ENCODE measurements at regions of chr7 and their contacts with region 1.

Region 1: DNA sequence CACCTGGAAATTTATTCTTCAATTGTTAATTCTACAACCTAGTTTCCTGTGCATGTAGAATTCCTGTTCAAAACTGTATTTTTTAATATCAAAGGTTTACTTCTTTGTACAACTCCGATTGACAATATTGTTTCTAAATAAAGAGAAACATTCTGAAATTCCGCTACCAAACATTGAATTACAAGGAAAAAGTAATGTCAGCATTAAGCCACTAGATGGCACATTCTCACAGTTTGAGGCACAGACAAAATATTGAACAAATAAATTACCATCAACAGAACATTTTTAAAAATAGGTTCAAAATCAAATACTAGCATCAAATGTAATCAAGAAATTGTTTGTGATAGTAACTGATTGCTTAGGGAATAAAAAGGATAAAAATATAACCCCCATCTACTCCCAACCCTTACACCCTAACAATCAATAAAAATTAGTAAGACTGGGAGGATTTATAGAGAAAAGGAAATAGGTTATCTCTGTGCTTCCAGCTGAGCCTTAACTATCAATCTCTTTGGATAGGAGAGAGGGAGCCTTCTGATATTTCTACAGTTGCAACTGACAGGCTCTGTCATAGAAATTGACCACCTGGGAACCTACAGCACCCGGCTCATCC is 86.6 kb upstream of the C7orf33 start:
- DNase-seq: peak in 7 of 9 donors; percentile 18 to 52 (median 40)
- ATAC-seq: no peak
- H3K4me3 ChIP-seq: no peak overlapping the region
- H3K4me3 Mint-ChIP-seq: no peak overlapping the region
- H3K27ac ChIP-seq: no peak overlapping the region
- H3K27ac Mint-ChIP-seq: no peak overlapping the region
- H3K4me1 ChIP-seq: no peaks in the 10 kb centered on the region
- H3K4me1 Mint-ChIP-seq: peaks cover 0 to 7% (median 0%) of the 10 kb centered on the region in 7 donors
- H3K27me3 ChIP-seq: no peaks in the 10 kb centered on the region
- H3K27me3 Mint-ChIP-seq: peaks cover 0 to 27% (median 16%) of the 10 kb centered on the region in 5 donors

Region 2: DNA sequence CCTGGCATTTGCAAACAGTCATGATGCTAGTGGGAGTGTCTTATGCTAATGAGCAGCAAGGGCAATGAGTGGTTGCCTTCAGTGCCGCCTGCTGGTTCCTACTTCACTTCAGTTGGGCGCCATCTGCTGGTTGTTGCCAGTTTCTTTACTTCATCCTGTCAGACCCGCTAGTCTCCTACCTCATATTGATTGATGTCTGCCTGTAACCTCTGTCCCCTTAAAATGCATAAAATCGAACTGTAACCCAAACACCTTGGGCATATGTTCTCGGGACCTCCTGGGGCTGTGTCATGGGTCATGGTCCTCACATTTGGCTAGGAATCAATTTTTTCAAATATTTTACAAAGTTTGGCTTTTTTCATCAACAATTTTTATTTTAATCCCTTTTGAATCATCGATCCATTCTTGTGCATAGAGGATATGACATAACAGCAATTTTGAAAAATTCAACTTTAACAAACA is 23.8 kb after region 1 on chr7:
- CTCF ChIA-PET with region 1: no interaction called
- POLR2A ChIA-PET with region 1: no interaction called
- intact Hi-C with region 1: loop called in 1 of 2 experiments (anchors 1 kb)
- DNase-seq: peak; percentile 63 to 81 (median 77)
- ATAC-seq: peak; percentile 100
- H3K4me3 ChIP-seq: no peak overlapping the region
- H3K4me3 Mint-ChIP-seq: no peak overlapping the region
- H3K27ac ChIP-seq: no peak overlapping the region
- H3K27ac Mint-ChIP-seq: no peak overlapping the region
- H3K4me1 ChIP-seq: no peaks in the 10 kb centered on the region
- H3K4me1 Mint-ChIP-seq: peaks cover 0 to 5% (median 0%) of the 10 kb centered on the region in 7 donors
- H3K27me3 ChIP-seq: no peaks in the 10 kb centered on the region
- H3K27me3 Mint-ChIP-seq: peaks cover 17 to 45% (median 30%) of the 10 kb centered on the region in 5 donors

Region 3: DNA sequence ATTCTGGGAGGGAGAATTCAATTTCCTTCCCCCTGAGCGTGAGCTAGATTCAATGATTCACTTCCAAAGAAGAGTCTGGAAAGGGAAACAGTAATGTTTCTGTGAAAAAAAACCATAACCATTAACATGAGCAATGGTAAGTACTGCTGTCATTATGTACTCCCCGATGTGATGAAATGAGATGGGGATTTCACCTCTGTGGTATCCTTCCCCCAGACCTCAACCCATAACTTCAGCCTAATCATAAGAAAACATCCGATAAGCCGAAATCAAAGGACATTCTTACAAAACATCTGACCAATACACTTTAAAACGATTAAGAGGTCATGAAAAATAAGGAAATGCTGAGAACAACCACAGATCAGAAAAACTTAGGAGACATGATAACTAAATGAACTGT is 352.9 kb after region 1 on chr7:
- CTCF ChIA-PET with region 1: no interaction called
- POLR2A ChIA-PET with region 1: no interaction called
- intact Hi-C with region 1: loop called in 1 of 2 experiments (anchors 5 kb)
- DNase-seq: no peak
- ATAC-seq: peak; percentile 57
- H3K4me3 ChIP-seq: no peak overlapping the region
- H3K4me3 Mint-ChIP-seq: peak overlapping the region in 1 of 10 donors; percentile 60
- H3K27ac ChIP-seq: no peak overlapping the region
- H3K27ac Mint-ChIP-seq: peak overlapping the region in 1 of 9 donors; percentile 63
- H3K4me1 ChIP-seq: peaks cover 3 to 5% of the 10 kb centered on the region in 2 donors
- H3K4me1 Mint-ChIP-seq: peaks cover 8 to 45% (median 15%) of the 10 kb centered on the region in 7 donors
- H3K27me3 ChIP-seq: no peaks in the 10 kb centered on the region
- H3K27me3 Mint-ChIP-seq: no peaks in the 10 kb centered on the region

Region 4: DNA sequence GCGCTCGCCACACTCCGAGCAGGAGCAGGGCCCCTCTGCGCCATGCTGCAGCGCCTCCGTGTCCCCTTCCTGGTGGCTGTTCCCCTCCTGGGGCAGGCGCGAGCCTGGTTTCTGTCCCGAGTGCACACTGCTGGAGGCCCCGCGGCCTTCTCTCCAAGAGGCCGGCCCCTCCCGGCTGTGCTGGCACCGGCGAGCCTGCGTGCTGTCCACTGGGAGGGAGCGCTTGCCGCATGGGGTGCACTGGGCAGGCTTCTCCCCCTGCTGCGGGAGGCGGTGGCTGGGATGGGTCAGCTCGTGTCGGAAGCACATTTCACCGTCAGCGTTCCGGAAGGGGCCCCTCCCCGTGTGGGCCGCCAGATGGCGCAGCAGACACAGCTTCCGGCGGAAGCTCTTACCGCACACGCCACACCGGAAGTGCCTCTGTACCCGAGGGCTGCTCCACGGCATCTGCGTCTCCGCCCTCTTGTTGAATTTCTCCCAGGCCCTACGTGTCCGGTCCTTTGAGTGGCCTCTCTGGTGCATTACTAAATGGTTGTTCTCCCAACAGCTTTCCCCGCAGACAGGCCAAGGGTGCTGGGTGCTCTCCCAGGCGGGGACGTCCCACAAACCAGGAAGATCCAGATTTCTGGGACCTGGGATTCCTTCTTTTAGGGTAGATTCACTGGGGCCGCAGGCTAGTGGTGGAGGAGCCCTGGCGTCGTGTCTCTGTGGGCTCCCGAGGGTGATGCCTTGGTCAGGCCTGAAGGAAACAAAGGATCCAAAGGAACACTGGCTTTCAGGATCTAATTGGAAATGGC is 567.9 kb after region 1 on chr7:
- CTCF ChIA-PET with region 1: no interaction called
- POLR2A ChIA-PET with region 1: no interaction called
- intact Hi-C with region 1: loop called in 1 of 2 experiments (anchors 10 kb)
- DNase-seq: peak in 8 of 9 donors; percentile 31 to 57 (median 46)
- ATAC-seq: peak; percentile 90
- H3K4me3 ChIP-seq: no peak overlapping the region
- H3K4me3 Mint-ChIP-seq: peak overlapping the region in 5 of 10 donors; percentile 16 to 51 (median 35)
- H3K27ac ChIP-seq: peak overlapping the region; percentile 58
- H3K27ac Mint-ChIP-seq: peak overlapping the region in 7 of 9 donors; percentile 25 to 81 (median 76)
- H3K4me1 ChIP-seq: no peaks in the 10 kb centered on the region
- H3K4me1 Mint-ChIP-seq: peaks cover 8 to 32% (median 15%) of the 10 kb centered on the region in 7 donors
- H3K27me3 ChIP-seq: no peaks in the 10 kb centered on the region
- H3K27me3 Mint-ChIP-seq: no peaks in the 10 kb centered on the region

Measured in naive thymus-derived CD4-positive, alpha-beta T cell (primary cell).